ENCODE measurements at regions of chr19 and their contacts with region 1.

Region 1: GRCh38 chr19:13033819-13034611 is 38.7 kb downstream of the NFIX start:
- DNase-seq: peak; percentile 77
- ATAC-seq: peak; percentile 88
- H3K4me3 Mint-ChIP-seq: no peak overlapping the region
- H3K27ac Mint-ChIP-seq: no peak overlapping the region
- H3K4me1 Mint-ChIP-seq: peaks cover 10% of the 10 kb centered on the region
- H3K27me3 Mint-ChIP-seq: no peaks in the 10 kb centered on the region
- CTCF ChIP-seq: peak; percentile 75

Region 2: GRCh38 chr19:13007292-13008045 is 26.5 kb before region 1 on chr19:
- CTCF ChIA-PET with region 1: interaction called, 13 read pairs
- POLR2A ChIA-PET with region 1: no interaction called
- intact Hi-C with region 1: no loop called
- DNase-seq: no peak
- ATAC-seq: no peak
- H3K4me3 Mint-ChIP-seq: no peak overlapping the region
- H3K27ac Mint-ChIP-seq: no peak overlapping the region
- H3K4me1 Mint-ChIP-seq: peaks cover 4% of the 10 kb centered on the region
- H3K27me3 Mint-ChIP-seq: peaks cover 25% of the 10 kb centered on the region
- CTCF ChIP-seq: no peak

Region 3: DNA sequence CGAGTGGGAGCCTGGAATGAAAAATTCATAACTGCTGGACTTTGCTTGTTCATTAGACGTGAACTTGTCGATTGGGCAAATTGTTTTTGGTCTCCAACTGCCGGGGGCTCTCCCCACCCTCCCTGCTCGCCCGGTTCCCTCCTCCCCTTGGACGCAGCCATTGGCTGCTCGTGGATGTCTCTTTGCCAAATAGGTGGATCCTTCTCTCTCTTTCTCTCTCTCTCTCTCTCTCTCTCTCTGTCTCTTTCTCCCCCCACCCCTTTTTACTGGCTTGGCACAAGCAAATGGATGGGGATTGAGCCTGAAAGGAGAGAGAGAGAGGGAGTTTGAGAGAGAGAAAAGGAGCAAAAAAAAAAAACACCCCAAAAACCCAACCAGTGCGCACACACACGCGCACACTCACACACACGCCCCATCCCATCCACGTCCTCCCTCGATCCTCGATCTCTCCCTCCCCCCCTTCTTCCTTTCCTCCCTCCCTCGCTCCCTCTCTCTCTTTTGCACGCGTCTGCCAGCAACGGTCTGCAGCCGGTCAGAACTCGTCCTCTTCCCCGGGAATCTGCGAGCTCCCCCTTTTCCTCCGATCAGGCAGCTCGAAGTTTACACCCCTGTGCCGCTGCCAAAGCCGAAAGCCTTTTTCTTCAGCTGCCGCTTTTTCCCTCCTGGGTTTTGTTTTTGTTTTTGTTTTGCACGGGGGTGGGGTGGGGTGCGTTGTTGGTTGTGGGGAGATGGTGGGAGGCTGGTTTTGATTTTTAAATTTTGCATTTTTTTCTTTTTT is 11.0 kb before region 1 on chr19:
- CTCF ChIA-PET with region 1: interaction called, 15 read pairs
- POLR2A ChIA-PET with region 1: interaction called, 7 read pairs
- intact Hi-C with region 1: no loop called
- DNase-seq: peak; percentile 29
- ATAC-seq: peak; percentile 63
- H3K4me3 Mint-ChIP-seq: peak overlapping the region; percentile 64
- H3K27ac Mint-ChIP-seq: peak overlapping the region; percentile 12
- H3K4me1 Mint-ChIP-seq: peaks cover 18% of the 10 kb centered on the region
- H3K27me3 Mint-ChIP-seq: peaks cover 21% of the 10 kb centered on the region
- CTCF ChIP-seq: no peak

Region 4: DNA sequence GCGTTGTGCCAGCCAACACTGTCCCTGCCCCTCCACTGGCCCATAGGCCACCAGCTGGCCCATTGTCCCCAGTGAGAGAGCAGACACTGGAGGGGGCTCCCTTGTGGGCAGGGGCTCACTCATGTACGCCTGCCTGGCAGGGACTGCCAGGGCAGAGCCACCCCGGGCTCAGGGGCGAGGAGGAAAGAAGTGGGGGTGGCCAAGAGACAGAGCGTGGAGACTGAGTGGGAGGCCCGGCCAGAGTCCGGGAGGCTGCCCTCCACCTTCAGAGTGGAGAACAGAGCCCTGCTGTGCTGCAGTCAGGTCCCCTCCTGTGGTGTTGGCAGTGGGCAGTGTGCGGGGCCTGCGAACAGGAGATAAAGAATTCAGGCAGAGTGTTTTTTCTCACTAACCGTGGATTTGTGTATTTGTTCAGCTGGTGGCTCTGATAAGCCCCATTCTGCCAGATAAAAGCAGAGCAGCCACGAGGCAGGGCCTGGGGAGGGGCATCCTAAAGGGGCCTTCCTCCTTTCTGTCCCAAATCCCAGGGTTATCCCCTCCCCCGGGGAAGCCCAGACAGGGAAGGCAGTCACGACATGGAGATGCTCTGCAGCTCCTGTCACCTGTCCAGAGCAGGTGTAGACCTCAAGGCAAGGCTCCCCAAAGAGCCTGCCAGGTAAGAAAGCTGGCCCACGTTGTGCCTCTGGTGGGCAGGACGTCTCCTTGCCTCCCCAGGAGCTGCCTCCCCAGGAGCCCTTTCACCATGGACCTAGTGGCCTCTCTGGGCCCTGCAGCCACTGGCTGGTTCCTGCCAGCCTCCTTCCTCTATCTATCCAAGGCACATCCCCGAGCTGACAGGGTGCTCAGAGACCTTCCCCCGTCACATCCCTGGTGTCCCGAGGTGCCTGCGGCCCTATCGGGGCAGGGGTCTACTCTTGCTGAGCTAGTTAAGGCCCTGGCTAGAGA is 35.7 kb after region 1 on chr19:
- CTCF ChIA-PET with region 1: interaction called, 11 read pairs
- POLR2A ChIA-PET with region 1: interaction called, 3 read pairs
- intact Hi-C with region 1: no loop called
- DNase-seq: no peak
- ATAC-seq: no peak
- H3K4me3 Mint-ChIP-seq: no peak overlapping the region
- H3K27ac Mint-ChIP-seq: no peak overlapping the region
- H3K4me1 Mint-ChIP-seq: no peaks in the 10 kb centered on the region
- H3K27me3 Mint-ChIP-seq: no peaks in the 10 kb centered on the region
- CTCF ChIP-seq: no peak

Region 5: DNA sequence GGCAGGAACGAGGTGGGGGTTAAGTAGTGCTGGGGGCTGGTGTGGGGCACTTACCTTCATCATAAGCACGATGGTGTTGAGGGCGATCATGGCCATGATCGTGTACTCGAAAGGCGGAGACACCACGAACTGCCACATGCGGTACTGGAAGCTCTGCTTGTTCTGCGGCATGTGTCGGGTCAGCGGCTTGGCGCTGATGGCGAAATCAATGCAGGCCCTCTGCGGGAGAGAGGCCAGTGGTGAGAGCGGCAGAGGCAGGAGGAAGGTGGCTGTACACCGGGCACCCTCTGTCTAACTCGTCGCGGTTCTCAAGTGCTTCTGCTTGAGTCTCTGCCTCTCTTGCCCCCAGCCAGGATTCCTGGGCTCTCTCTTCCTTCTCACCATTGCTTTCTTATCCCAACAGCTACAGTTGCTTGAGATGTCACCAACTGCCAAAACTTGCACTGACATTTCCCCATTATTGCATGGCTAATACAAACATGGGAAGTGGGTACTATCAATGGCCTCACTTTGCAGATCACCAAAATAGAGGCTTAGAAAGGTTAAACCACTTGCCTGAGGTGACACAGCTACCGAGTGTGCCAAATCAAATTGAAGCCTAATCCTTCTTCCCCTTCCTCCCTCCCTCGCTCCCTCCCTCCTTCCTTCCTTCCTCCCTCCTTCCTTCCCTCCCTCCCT is 221.2 kb after region 1 on chr19:
- CTCF ChIA-PET with region 1: no interaction called
- POLR2A ChIA-PET with region 1: no interaction called
- intact Hi-C with region 1: no loop called
- DNase-seq: no peak
- ATAC-seq: no peak
- H3K4me3 Mint-ChIP-seq: no peak overlapping the region
- H3K27ac Mint-ChIP-seq: no peak overlapping the region
- H3K4me1 Mint-ChIP-seq: no peaks in the 10 kb centered on the region
- H3K27me3 Mint-ChIP-seq: peaks cover 19% of the 10 kb centered on the region
- CTCF ChIP-seq: no peak